Activated CD4-positive, alpha-beta T cell treated with anti-CD3 and anti-CD28 coated beads, Interleukin-2, amount 10 ng/mL, durations not matched to agents 24 days and 14 days (primary cell): ENCODE measurements at regions of chr17 and their contacts with region 1.

Region 1: GRCh38 chr17:61862975-61863800 is at the start of gene BRIP1:
- DNase-seq: peak; percentile 96
- H3K4me3 Mint-ChIP-seq: peak within 1 kb of the TSS; percentile 98
- H3K27ac Mint-ChIP-seq: peak within 1 kb of the TSS; percentile 98
- H3K4me1 Mint-ChIP-seq: peaks cover 38% of the 10 kb centered on the region
- H3K27me3 Mint-ChIP-seq: no peaks in the 10 kb centered on the region
- total RNA-seq, gene BRIP1: 17.2 and 19.9 TPM in 2 replicates

Region 2: GRCh38 chr17:62065598-62066468 is 202.6 kb after region 1 on chr17:
- intact Hi-C with region 1: loop called (anchors 1 kb)
- DNase-seq: peak; percentile 99
- H3K4me3 Mint-ChIP-seq: peak overlapping the region; percentile 97
- H3K27ac Mint-ChIP-seq: peak overlapping the region; percentile 99
- H3K4me1 Mint-ChIP-seq: peaks cover 29% of the 10 kb centered on the region
- H3K27me3 Mint-ChIP-seq: no peaks in the 10 kb centered on the region